H1 (cell line): ENCODE measurements at regions of chr10 and their contacts with region 1.

Region 1: GRCh38 chr10:70925377-70926225 is 37.2 kb upstream of the PCBD1 start:
- DNase-seq: peak; percentile 17 to 91
- H3K4me3 ChIP-seq: no peak overlapping the region
- H3K27ac ChIP-seq: no peak overlapping the region
- H3K4me1 ChIP-seq: no peaks in the 10 kb centered on the region
- H3K27me3 ChIP-seq: no peaks in the 10 kb centered on the region; a peak in 1 of 7 replicates
- CTCF ChIP-seq: peak; percentile 89 to 95 (median 91)
- EP300 ChIP-seq: no peak
- POLR2A ChIP-seq: no peak
- RAD21 ChIP-seq: peak; percentile 95 to 96

Region 2: GRCh38 chr10:70853038-70853437 is 72.6 kb before region 1 on chr10:
- CTCF ChIA-PET with region 1: no interaction called
- POLR2A ChIA-PET with region 1: no interaction called
- DNase-seq: no peak
- H3K4me3 ChIP-seq: no peak overlapping the region
- H3K27ac ChIP-seq: no peak overlapping the region
- H3K4me1 ChIP-seq: no peaks in the 10 kb centered on the region
- H3K27me3 ChIP-seq: no peaks in the 10 kb centered on the region
- CTCF ChIP-seq: no peak
- EP300 ChIP-seq: no peak
- POLR2A ChIP-seq: no peak
- RAD21 ChIP-seq: no peak

Region 3: DNA sequence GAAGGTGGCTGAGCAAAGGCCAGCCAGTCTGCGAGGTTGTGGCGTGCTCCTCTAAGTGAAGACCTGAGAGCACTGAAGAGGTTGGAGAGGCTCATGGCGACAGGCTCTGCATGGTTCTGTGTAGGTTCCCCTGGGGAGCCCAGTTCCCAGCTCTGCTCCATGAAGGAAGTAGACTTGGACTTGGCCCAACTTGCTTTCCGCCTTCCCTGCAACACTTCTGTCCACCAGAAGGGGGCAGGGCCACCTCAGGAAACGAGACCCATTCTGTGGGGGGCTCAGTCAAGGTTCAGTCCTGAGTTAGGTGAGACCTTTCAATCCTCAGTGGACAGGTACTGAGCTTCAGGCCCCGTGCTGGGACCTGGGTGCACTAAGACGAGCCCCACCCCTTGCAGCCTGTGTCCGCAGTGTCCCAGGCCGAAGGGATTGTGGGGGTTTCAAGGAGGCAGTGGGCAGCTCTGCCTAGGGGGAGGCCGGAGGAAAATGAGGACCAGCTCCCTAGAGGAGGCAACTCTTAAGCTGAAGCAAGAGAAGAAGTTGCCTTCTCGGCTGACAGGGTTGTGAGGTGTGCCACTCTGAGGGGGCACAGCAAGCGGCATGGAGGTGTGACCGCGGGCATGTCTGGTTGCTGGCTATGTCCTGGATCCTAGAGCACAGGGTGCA is 22.2 kb before region 1 on chr10:
- CTCF ChIA-PET with region 1: interaction called, 237 read pairs
- POLR2A ChIA-PET with region 1: interaction called, 3 read pairs
- DNase-seq: peak in 1 of 2 experiments; percentile 93
- H3K4me3 ChIP-seq: no peak overlapping the region
- H3K27ac ChIP-seq: no peak overlapping the region
- H3K4me1 ChIP-seq: no peaks in the 10 kb centered on the region; a peak in 1 of 7 replicates
- H3K27me3 ChIP-seq: no peaks in the 10 kb centered on the region
- CTCF ChIP-seq: peak; percentile 92 to 99 (median 97)
- EP300 ChIP-seq: no peak
- POLR2A ChIP-seq: no peak
- RAD21 ChIP-seq: peak; percentile 96 to 99

Region 4: DNA sequence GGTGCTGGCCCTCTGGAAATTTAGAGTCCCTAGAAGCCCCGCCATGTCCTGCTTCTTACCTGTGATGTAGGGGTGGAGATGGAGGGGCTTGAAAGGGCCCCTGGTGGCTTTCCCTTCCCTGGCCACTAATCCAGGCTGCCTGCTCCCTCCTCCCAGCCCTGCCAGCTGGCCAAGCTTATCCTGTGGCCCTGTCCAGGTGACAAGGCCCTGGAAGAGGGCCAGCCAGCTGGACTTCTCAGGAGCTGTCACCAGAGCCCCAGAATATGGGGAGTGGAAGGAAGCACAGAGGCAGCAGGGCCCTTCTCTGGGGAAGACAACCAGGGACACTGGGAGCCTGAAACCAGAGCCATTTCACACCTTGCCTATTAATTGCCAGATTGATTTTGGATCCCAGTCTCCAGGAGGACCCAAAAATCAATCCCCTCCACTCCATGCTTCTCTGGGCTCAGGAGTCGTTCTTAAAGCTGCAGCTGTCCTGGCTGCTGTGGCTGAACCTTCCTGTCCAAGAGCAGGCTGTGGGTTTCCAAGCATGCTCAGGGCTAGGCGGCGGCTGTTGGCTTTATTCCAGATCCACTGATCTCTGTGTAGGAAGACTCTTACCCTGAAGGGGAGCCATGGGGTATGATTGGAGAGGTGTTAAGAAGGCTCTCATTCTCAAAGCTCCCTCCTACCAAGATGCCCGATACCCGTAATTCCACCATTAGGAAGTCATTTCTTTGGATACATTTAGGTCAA is 15.4 kb after region 1 on chr10:
- CTCF ChIA-PET with region 1: interaction called, 34 read pairs
- POLR2A ChIA-PET with region 1: no interaction called
- DNase-seq: no peak
- H3K4me3 ChIP-seq: no peak overlapping the region
- H3K27ac ChIP-seq: no peak overlapping the region
- H3K4me1 ChIP-seq: no peaks in the 10 kb centered on the region
- H3K27me3 ChIP-seq: no peaks in the 10 kb centered on the region; a peak in 1 of 7 replicates
- CTCF ChIP-seq: no peak
- EP300 ChIP-seq: no peak
- POLR2A ChIP-seq: no peak
- RAD21 ChIP-seq: no peak

Region 5: GRCh38 chr10:71064413-71065118 is 139.0 kb after region 1 on chr10:
- CTCF ChIA-PET with region 1: interaction called, 28 read pairs
- POLR2A ChIA-PET with region 1: no interaction called
- DNase-seq: no peak
- H3K4me3 ChIP-seq: no peak overlapping the region
- H3K27ac ChIP-seq: no peak overlapping the region
- H3K4me1 ChIP-seq: peaks cover 0 to 9% (median 3%) of the 10 kb centered on the region in 4 experiments; a peak in 5 of 7 replicates
- H3K27me3 ChIP-seq: no peaks in the 10 kb centered on the region
- CTCF ChIP-seq: peak; percentile 3 to 57 (median 53)
- EP300 ChIP-seq: no peak
- POLR2A ChIP-seq: no peak
- RAD21 ChIP-seq: peak; percentile 34 to 52

Region 6: DNA sequence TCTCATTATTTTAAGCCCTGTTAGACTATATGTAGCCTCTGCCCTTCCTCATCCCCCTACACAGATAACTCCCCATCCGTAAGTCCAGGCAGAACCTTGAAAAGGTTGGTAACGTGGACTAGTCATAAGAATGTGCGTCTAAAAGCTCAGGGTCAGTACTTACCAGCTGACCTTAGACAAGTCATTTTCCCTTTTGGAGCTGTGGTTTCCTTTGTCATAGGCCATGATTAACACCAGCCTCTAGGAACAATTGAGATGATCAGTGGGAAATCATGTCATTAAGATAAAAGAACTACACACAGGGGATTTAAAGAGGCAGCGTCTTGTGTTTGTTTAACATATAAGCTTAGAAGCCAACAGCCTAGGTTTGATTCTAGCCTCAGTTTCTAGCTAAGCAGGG is 279.9 kb after region 1 on chr10:
- CTCF ChIA-PET with region 1: interaction called, 58 read pairs
- POLR2A ChIA-PET with region 1: no interaction called
- DNase-seq: no peak
- H3K4me3 ChIP-seq: no peak overlapping the region
- H3K27ac ChIP-seq: no peak overlapping the region
- H3K4me1 ChIP-seq: peaks cover 0 to 9% (median 4%) of the 10 kb centered on the region in 4 experiments; a peak in 5 of 7 replicates
- H3K27me3 ChIP-seq: peaks cover 1 to 11% (median 7%) of the 10 kb centered on the region in 4 experiments
- CTCF ChIP-seq: no peak
- EP300 ChIP-seq: no peak
- POLR2A ChIP-seq: no peak
- RAD21 ChIP-seq: no peak

Region 7: GRCh38 chr10:71278691-71279588 is 353.3 kb after region 1 on chr10:
- CTCF ChIA-PET with region 1: interaction called, 54 read pairs
- POLR2A ChIA-PET with region 1: no interaction called
- DNase-seq: no peak
- H3K4me3 ChIP-seq: no peak overlapping the region
- H3K27ac ChIP-seq: no peak overlapping the region; the same call in 1 of the 2 replicates
- H3K4me1 ChIP-seq: peaks cover 0 to 25% (median 16%) of the 10 kb centered on the region in 4 experiments; a peak in 6 of 7 replicates
- H3K27me3 ChIP-seq: no peaks in the 10 kb centered on the region
- CTCF ChIP-seq: no peak
- EP300 ChIP-seq: no peak
- POLR2A ChIP-seq: no peak
- RAD21 ChIP-seq: no peak